Activated naive CD4-positive, alpha-beta T cell treated with anti-CD3 and anti-CD28 coated beads for 36 hours (primary cell): ENCODE measurements at regions of chr1 and their contacts with region 1.

Region 1: DNA sequence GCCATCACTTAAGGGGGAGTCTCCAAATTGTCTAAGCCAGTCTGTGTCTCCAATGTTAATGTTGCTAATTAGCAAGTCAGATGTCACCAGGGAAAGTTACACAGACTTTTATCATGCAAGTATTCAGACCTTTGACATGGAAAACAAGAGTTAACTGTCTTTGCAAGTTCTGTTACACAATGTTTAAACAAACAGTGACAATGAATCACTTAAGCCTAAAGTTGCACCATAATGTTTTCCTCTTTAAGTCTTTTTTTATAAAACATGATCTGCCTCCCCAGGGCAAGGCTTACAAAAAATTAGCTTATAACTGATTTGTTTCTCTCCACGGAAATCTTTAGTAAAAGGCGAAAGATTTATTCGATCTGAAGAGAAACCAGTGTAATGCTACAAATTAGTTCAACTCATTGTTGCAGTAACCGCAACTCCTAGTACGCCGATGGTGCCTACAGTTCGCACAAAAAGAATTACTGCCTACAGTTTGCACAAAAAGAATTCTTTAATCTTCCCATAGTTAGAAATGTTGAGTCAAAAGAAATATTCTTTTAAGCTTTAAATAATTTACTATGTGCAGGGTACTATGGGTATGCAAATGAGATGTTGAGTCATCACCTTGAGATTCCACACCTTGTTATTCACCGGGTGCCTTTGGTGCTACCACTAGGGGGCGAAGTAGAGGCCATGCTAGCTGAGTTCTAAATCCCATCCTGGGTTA is 45.3 kb downstream of the HHAT start:
- DNase-seq: peak; percentile 93
- H3K4me3 Mint-ChIP-seq: no peak overlapping the region
- H3K27ac Mint-ChIP-seq: peak overlapping the region; percentile 88
- H3K4me1 Mint-ChIP-seq: peaks cover 36% of the 10 kb centered on the region
- H3K27me3 Mint-ChIP-seq: no peaks in the 10 kb centered on the region

Region 2: DNA sequence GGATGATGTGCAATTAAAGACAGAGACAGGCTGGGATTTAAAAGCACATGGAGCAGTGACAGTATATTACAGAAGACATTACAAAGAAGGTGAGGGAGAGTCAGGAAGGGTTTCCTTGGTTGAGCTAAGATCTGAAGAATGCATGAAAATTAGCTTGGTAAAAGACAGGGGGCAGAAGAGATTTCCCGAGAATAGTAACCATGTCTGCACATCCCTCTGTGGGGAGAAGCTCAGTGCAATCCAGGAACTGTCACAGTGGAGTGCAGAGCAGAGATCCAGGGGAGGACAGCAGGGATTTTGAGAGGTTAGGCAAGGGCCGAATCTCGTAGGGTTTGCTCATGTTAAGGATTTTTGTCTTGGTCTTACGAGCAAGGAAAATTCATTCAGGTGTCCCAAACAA is 109.1 kb before region 1 on chr1:
- CTCF ChIA-PET with region 1: no interaction called
- intact Hi-C with region 1: no loop called
- DNase-seq: no peak
- H3K4me3 Mint-ChIP-seq: no peak overlapping the region
- H3K27ac Mint-ChIP-seq: no peak overlapping the region
- H3K4me1 Mint-ChIP-seq: no peaks in the 10 kb centered on the region
- H3K27me3 Mint-ChIP-seq: peaks cover 2% of the 10 kb centered on the region

Region 3: DNA sequence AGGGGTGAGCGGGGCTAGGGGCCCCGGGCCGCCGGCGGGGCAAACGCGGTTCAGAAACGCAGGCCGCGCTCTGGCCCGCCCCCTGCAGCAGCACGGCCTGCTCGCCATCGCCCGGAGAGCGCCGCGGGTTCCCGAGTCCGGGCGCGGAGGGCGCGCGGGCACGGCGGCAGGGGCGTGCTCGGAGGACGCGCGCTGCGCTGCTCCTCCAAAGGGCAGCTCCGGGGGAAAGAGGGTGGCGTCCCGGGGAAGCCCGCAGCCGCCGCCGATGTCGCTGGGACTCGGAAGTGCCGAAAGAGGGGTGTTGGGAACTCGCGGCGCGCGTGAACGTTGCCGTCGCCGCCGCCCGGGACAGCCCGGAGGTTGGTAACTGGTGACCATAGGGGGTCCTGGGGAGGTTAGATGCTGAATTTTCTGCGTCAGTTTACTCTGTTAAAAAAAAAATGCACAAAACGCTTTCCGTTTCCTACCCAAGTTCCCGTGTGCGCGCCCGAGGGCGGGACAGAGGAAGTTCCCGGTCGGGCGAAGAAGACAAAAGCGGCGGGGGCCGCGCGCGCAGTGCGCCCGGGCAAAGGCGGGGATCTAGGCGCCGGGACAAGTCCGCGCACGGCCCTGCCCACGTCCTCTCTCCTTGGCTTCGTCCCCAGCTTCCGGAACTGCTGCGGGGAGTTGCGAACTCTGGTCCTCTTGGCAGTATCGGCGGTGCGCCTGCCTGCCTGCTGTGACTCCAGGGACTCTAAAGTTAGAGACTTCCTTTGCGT is 45.1 kb before region 1 on chr1 and contains the start of gene HHAT:
- CTCF ChIA-PET with region 1: interaction called, 8 read pairs
- intact Hi-C with region 1: loop called (anchors 1 kb)
- DNase-seq: peak; percentile 84
- H3K4me3 Mint-ChIP-seq: peak within 1 kb of the TSS; percentile 93
- H3K27ac Mint-ChIP-seq: peak within 1 kb of the TSS; percentile 95
- H3K4me1 Mint-ChIP-seq: peaks cover 41% of the 10 kb centered on the region
- H3K27me3 Mint-ChIP-seq: peaks cover 4% of the 10 kb centered on the region
- total RNA-seq, gene HHAT: 3.6 to 3.9 TPM

Region 4: DNA sequence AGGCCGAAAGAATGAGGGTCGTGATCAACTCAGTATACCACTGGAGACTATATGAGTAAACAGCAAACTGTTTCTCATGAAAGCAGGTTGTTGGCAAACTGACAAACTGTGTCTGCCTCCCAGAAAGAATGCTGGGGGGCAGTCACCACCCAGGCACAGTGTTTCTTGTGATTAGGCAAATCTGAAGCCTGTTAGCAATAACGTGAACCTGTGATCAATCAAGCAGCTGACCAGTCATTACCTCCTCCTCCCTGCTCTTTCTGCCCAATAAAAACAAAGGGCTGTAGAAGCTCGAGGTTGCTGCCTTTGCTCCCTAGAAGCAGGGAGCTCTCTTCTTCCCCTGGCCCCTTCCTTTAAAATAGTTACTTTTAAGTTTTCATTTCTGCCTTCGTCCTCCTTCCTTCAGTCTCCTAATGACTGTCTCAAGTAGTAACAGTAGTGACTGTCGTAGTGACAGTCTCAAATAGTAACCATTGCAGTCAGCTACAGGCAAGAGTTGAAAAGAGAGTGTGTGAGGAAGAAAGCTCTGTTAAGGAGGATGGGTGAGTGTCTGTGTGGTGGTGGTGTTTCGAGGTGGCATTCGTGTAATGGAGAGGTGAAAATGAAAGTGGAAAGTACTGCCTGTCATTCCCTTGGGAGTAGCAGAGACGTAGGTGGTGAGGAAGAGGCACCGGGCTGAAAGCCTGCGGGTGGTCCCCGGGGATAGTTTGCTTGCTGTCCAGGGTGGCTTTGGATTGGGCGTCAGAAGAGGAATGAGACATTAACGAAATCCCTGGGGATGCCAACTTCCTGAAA is 30.9 kb before region 1 on chr1:
- CTCF ChIA-PET with region 1: interaction called, 11 read pairs
- intact Hi-C with region 1: loop called (anchors 1 kb)
- DNase-seq: no peak
- H3K4me3 Mint-ChIP-seq: no peak overlapping the region
- H3K27ac Mint-ChIP-seq: no peak overlapping the region
- H3K4me1 Mint-ChIP-seq: peaks cover 40% of the 10 kb centered on the region
- H3K27me3 Mint-ChIP-seq: no peaks in the 10 kb centered on the region

Region 5: DNA sequence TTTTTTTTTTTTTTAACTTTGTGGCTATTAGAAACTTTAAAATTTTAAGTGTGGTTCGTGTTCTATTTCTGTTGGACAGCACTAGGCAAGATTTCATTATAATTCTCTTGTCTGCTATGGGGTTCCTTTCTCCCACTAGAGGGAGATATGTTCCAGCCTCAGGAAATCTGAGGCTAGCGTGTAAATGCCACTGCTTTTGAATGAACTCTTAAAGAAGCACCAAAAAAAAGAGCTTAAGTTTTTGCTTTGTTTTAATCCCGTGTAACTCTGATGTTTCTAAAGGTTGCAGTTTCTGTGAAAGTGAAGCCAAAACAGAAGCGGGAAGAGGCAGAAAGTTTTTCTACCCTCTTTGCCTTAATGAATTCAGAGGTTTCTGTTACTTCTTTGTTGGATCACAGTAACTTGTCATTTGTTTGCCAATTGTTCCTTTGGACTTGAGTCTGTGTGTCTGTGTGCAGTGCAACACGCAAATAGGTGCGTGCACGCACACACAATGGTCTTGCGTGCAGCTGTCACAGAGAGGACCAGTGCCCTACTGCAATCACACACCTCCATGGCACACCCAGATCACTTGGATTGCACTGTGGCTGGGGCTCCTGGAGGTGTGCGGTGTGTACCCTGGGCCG is 13.1 kb before region 1 on chr1:
- CTCF ChIA-PET with region 1: interaction called, 9 read pairs
- intact Hi-C with region 1: loop called (anchors 1 kb)
- DNase-seq: no peak
- H3K4me3 Mint-ChIP-seq: no peak overlapping the region
- H3K27ac Mint-ChIP-seq: peak overlapping the region; percentile 13
- H3K4me1 Mint-ChIP-seq: peaks cover 10% of the 10 kb centered on the region
- H3K27me3 Mint-ChIP-seq: no peaks in the 10 kb centered on the region

Region 6: GRCh38 chr1:210384630-210385029 is 10.6 kb after region 1 on chr1:
- CTCF ChIA-PET with region 1: interaction called, 26 read pairs
- intact Hi-C with region 1: no loop called
- DNase-seq: no peak
- H3K4me3 Mint-ChIP-seq: no peak overlapping the region
- H3K27ac Mint-ChIP-seq: no peak overlapping the region
- H3K4me1 Mint-ChIP-seq: no peaks in the 10 kb centered on the region
- H3K27me3 Mint-ChIP-seq: no peaks in the 10 kb centered on the region

Region 7: DNA sequence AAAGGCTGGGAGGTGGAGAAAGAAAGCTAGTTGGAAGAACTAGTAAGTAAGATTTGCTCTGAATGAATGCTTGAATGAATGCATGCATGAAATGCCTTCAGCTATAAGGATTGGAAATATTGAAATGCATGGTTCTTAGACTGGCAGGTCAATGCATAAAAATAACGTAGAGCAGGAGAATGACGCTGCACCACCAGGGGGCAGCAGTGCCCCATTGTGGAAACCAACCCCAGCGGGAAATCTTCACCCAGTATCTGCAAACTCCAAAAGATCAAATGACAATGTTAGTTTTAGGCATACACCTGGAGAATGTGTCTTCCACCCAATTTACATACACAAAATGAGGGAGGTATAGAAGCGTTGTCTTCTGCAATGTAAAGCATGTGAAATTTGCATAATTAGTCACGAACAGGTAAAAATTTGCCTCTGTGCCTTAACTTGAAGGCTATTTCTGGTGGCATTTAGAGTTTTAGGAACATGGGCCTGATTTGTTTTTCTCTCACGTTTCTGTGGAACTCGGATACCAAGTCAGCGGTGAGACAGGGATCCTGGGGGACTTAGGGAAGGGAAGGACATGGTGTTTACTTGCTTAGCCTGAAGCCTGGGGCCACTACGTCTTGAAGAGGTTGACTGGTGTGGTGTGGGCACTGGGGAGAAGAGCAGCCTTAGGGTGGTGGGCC is 33.3 kb after region 1 on chr1:
- CTCF ChIA-PET with region 1: interaction called, 40 read pairs
- intact Hi-C with region 1: no loop called
- DNase-seq: peak; percentile 86
- H3K4me3 Mint-ChIP-seq: no peak overlapping the region
- H3K27ac Mint-ChIP-seq: no peak overlapping the region
- H3K4me1 Mint-ChIP-seq: peaks cover 5% of the 10 kb centered on the region
- H3K27me3 Mint-ChIP-seq: peaks cover 2% of the 10 kb centered on the region

Region 8: GRCh38 chr1:210464519-210465039 is 90.5 kb after region 1 on chr1:
- CTCF ChIA-PET with region 1: interaction called, 3 read pairs
- intact Hi-C with region 1: loop called (anchors 1 kb)
- DNase-seq: peak; percentile 22
- H3K4me3 Mint-ChIP-seq: no peak overlapping the region
- H3K27ac Mint-ChIP-seq: peak overlapping the region; percentile 57
- H3K4me1 Mint-ChIP-seq: peaks cover 23% of the 10 kb centered on the region
- H3K27me3 Mint-ChIP-seq: peaks cover 2% of the 10 kb centered on the region